ENCODE measurements at regions of chr12 and their contacts with region 1.

Region 1: DNA sequence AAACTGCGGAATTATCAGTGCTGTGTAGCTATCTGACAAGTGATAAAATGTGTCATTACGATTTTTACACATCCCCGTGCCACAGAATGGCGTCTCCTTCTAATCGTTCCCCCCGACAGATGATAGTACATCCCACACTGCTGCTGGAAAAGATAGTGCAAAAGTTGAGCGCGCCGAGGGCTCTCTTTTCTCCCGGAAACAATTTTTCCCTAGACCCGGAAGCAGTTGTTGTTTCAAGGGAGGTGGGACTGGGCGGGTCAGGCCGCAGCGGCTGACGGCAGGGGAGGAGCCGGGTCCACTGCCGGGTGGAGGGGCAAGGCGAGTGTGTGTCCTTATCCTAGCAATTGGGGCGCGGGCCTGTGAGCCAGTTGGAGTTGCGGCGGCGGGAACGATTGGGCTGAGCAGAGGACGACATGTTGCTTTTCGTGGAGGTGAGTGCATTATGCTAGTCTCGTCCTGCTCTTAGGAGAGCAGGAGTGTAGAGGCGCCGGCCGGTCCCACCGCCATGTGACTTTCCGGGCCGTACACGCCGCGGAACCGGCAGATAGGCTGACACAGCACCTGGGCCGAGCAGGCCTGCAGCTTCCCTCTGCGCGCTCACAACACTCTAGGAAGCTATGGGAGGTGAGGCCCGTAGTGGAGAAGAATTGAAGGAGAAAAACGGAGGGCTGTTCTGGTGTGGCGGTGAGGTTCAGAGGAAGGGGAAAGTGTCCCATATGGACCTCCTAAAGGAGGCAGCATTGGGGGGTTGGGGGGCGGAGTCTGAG is at the start of gene LARP4:
- DNase-seq: peak; percentile 95
- ATAC-seq: peak; percentile 94
- H3K4me3 ChIP-seq: peak within 1 kb of the TSS; percentile 81 to 96 (median 86)
- H3K27ac ChIP-seq: peak within 1 kb of the TSS; percentile 94
- H3K4me1 ChIP-seq: peaks cover 51% of the 10 kb centered on the region
- H3K27me3 ChIP-seq: no peaks in the 10 kb centered on the region; a peak in 1 of 5 replicates
- CTCF ChIP-seq: 0 out of 2 replicates have a peak, but pooled peaks have one; percentile 18
- EP300 ChIP-seq: peak; percentile 8 to 15; a peak in 1 of 4 replicates
- POLR2A ChIP-seq: peak; percentile 92 to 95
- RAD21 ChIP-seq: no peak
- total RNA-seq, gene LARP4: 42.7 and 56.2 TPM in 2 replicates

Region 2: DNA sequence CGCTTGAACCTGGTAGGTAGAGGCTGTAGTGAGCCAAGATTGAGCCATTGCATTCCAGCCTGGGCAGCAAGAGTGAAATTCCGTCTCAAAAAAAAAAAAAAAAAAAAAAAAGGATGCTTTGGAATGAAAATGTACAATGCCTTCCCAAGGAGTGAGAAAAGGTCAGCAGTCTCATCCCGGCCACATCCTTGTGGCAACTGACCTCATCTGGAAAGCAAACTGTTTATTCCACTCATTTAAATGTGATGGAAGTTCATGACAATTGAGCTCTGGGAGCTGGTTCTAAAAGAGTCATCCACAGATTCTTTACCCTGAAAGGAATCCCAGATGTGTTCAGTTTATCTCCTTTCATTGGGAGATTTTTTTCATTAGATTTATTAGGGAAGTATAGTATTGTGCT is 98.1 kb before region 1 on chr12:
- CTCF ChIA-PET with region 1: no interaction called
- POLR2A ChIA-PET with region 1: no interaction called
- in situ Hi-C with region 1: no loop called
- intact Hi-C with region 1: no loop called
- DNase-seq: no peak
- ATAC-seq: no peak
- H3K4me3 ChIP-seq: no peak overlapping the region
- H3K27ac ChIP-seq: no peak overlapping the region
- H3K4me1 ChIP-seq: peaks cover 9% of the 10 kb centered on the region; the same call in 1 of the 2 replicates
- H3K27me3 ChIP-seq: no peaks in the 10 kb centered on the region; a peak in 1 of 5 replicates
- CTCF ChIP-seq: no peak
- EP300 ChIP-seq: no peak
- POLR2A ChIP-seq: no peak
- RAD21 ChIP-seq: no peak

Region 3: GRCh38 chr12:50333441-50333840 is 67.3 kb before region 1 on chr12:
- CTCF ChIA-PET with region 1: no interaction called
- POLR2A ChIA-PET with region 1: no interaction called
- in situ Hi-C with region 1: no loop called
- intact Hi-C with region 1: loop called (anchors 10 kb)
- DNase-seq: no peak
- ATAC-seq: no peak
- H3K4me3 ChIP-seq: no peak overlapping the region
- H3K27ac ChIP-seq: no peak overlapping the region
- H3K4me1 ChIP-seq: no peaks in the 10 kb centered on the region
- H3K27me3 ChIP-seq: no peaks in the 10 kb centered on the region
- CTCF ChIP-seq: no peak
- EP300 ChIP-seq: no peak
- POLR2A ChIP-seq: no peak
- RAD21 ChIP-seq: no peak

Region 4: DNA sequence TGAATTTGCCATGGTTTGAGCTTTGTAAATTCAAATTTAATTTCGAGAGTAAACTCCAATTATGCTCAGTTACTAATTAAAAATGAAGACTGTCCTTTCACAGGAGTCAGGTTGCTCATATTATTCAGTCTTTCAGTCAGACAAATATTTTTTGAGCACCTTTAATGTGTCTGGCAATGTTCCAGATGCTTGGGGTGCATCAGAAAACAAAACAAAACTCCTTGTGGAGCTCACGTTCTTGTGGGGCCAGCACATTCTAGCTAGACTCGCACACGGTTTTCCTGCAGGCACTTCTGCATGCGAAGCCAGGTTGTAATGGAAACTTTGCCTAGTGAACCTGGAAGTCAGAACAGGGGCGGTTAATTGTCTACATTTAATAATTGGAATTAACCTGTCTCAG is 299.2 kb after region 1 on chr12:
- CTCF ChIA-PET with region 1: no interaction called
- POLR2A ChIA-PET with region 1: no interaction called
- in situ Hi-C with region 1: no loop called
- intact Hi-C with region 1: no loop called
- DNase-seq: no peak
- ATAC-seq: no peak
- H3K4me3 ChIP-seq: no peak overlapping the region
- H3K27ac ChIP-seq: no peak overlapping the region
- H3K4me1 ChIP-seq: peaks cover 24% of the 10 kb centered on the region
- H3K27me3 ChIP-seq: no peaks in the 10 kb centered on the region
- CTCF ChIP-seq: no peak
- EP300 ChIP-seq: no peak
- POLR2A ChIP-seq: no peak
- RAD21 ChIP-seq: no peak